Left ventricle myocardium inferior (tissue), 1 donor: ENCODE measurements at regions of chr2 and their contacts with region 1.

Region 1: GRCh38 chr2:171056307-171056706 is 104.4 kb downstream of the TLK1 start:
- DNase-seq: no peak
- H3K4me3 ChIP-seq: no peak overlapping the region
- H3K27ac ChIP-seq: no peak overlapping the region
- H3K4me1 ChIP-seq: no peaks in the 10 kb centered on the region
- H3K27me3 ChIP-seq: no peaks in the 10 kb centered on the region
- CTCF ChIP-seq: no peak

Region 2: DNA sequence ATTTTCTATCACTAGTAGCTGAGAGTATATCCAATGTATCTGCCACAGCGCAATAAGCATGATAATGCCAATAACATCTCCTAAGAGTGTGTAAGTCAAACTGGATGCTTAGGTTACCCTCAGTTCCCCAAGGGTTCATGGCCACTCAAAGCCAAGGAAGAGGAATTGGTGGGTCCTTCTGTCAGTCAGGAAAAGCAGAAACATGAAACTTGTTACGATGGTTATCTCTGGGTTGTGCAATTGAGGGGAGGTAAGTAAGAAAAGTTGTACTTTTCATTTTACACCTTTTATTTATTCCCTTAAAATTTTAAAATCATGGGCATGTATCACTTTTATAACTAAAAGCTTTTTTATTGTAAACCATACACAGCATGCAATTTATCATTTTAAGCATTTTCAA is 249.8 kb before region 1 on chr2:
- intact Hi-C with region 1: no loop called
- DNase-seq: no peak
- H3K4me3 ChIP-seq: no peak overlapping the region
- H3K27ac ChIP-seq: no peak overlapping the region
- H3K4me1 ChIP-seq: no peaks in the 10 kb centered on the region
- H3K27me3 ChIP-seq: peaks cover 70% of the 10 kb centered on the region
- CTCF ChIP-seq: no peak

Region 3: DNA sequence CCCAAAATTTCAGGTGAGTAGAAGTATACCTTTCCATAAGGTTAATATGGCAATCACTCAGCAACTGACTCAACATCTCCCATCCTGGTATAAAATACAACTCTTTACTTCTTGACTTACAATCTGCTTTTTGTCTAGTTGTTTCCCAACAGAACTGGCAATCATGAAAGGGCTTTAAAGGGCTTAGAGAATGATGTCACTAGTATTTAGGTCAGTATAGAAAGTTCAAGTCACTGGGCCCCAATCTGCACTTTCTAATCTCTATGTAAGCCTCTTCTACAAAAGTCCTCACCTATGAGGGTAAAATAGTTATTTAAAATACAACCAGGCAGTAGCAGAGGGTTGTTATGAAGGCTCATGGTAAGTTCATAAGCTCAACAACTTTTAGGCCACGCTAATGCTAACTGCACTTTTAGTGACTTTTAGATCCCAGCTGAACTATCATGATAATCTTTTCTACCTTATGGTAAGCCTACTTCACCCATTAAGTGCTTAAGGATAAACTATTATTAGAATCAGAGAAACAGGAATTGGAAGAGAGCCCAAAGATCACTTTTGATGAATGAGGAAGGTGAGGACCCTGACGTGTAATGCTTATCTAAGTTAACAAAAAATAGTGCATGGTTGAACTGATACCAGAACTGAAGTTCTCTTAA is 47.6 kb before region 1 on chr2:
- intact Hi-C with region 1: loop called (anchors 5 kb)
- DNase-seq: no peak
- H3K4me3 ChIP-seq: no peak overlapping the region
- H3K27ac ChIP-seq: no peak overlapping the region
- H3K4me1 ChIP-seq: no peaks in the 10 kb centered on the region
- H3K27me3 ChIP-seq: no peaks in the 10 kb centered on the region
- CTCF ChIP-seq: no peak